Activated naive CD4-positive, alpha-beta T cell treated with anti-CD3 and anti-CD28 coated beads for 36 hours (primary cell): ENCODE measurements at regions of chr16 and their contacts with region 1.

Region 1: DNA sequence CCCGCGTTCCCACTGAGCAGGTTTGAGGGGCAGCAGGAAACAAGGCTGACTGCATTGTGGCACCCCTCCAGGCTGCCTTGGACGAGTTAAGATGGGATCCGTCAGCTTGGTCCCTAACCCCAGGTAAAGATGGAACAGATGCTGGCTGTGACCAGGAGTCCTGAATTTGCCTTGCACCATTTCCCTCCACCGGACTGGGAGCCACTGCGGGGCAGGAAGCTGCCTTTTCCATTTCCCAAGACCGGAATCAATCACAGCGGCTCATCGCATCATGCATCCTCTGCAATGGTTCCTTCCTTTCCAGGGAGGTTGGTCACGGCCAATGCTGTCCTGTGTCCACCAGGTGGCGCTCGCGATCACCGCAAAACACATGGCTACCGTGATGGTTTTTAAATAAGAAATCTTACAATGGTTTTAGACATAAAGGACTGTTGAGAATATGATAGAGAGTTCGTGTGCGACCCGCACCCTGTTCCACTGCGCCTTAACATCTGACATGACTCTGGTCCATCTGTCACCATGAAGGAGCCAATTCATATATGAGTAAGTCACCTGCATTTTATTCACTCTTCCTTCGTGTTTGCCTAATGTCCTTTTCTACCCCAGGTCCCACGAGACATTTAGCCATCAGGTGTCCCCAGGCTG is 6.8 kb upstream of the MEAK7 start:
- DNase-seq: peak; percentile 86
- H3K4me3 Mint-ChIP-seq: no peak overlapping the region
- H3K27ac Mint-ChIP-seq: no peak overlapping the region
- H3K4me1 Mint-ChIP-seq: peaks cover 64% of the 10 kb centered on the region
- H3K27me3 Mint-ChIP-seq: no peaks in the 10 kb centered on the region

Region 2: DNA sequence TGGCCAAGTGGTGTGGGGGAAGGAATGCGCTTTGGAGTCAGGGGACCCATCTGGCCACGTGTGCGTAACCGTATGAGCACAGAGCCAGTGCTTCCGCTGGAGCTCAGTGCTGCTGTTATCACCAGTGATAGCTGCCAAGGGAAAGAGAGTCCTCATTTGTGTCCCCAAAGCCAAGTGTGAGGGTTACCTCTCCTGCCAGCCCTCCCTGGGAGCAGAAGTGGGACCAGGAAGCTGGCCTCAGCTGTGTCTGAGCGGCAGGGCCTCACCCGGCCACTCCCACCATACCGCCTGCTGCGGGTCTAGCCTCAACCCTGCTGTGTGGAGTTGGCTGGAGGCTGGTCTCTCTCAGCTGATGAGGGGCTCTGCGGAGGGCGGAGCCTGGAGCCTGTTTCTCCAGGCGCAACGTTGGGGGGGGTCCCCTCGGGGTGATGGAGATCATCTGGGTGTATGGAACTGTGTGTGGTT is 51.3 kb before region 1 on chr16:
- CTCF ChIA-PET with region 1: no interaction called
- intact Hi-C with region 1: no loop called
- DNase-seq: no peak
- H3K4me3 Mint-ChIP-seq: no peak overlapping the region
- H3K27ac Mint-ChIP-seq: no peak overlapping the region
- H3K4me1 Mint-ChIP-seq: no peaks in the 10 kb centered on the region
- H3K27me3 Mint-ChIP-seq: no peaks in the 10 kb centered on the region

Region 3: GRCh38 chr16:84548971-84549844 is 37.9 kb after region 1 on chr16:
- CTCF ChIA-PET with region 1: interaction called, 22 read pairs
- intact Hi-C with region 1: loop called (anchors 1 kb)
- DNase-seq: peak; percentile 65
- H3K4me3 Mint-ChIP-seq: peak overlapping the region; percentile 86
- H3K27ac Mint-ChIP-seq: peak overlapping the region; percentile 97
- H3K4me1 Mint-ChIP-seq: peaks cover 62% of the 10 kb centered on the region
- H3K27me3 Mint-ChIP-seq: no peaks in the 10 kb centered on the region